AG04449 (cell line): ENCODE measurements at regions of chr17 and their contacts with region 1.

Region 1: DNA sequence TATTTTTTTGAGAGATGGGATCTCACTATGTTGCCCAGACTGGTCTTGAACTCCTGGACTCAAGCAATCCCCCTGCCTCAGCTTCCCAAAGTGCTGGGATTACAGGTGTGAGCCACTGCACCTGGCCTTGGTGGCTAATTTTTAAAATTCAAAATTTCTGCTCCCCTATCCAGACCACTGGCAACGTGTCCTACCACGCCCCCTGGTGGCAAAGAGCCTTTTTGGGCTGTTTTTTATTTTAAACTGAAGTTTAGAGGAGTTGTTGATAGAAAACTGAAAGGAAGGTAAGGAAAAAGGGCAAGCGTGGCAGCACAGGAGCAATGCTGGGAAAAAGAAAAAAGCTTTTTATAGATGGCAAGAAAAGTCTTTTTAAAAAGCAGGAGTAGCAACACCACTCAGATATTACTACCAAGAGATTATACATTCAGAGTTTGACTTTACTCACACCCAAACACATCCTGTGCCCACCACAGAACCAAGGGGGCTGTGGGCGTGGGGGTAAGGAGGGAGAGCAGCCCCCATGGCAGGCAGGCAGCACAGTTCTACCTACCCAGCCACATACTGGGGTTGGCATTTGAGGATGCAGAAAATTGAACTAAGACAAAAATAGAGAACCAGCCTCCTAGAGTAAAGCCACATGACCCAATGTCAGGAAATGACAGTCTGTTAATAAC is 4.2 kb upstream of the MXRA7 start:
- DNase-seq: no peak
- H3K4me3 ChIP-seq: no peak overlapping the region
- CTCF ChIP-seq: peak; percentile 61

Region 2: DNA sequence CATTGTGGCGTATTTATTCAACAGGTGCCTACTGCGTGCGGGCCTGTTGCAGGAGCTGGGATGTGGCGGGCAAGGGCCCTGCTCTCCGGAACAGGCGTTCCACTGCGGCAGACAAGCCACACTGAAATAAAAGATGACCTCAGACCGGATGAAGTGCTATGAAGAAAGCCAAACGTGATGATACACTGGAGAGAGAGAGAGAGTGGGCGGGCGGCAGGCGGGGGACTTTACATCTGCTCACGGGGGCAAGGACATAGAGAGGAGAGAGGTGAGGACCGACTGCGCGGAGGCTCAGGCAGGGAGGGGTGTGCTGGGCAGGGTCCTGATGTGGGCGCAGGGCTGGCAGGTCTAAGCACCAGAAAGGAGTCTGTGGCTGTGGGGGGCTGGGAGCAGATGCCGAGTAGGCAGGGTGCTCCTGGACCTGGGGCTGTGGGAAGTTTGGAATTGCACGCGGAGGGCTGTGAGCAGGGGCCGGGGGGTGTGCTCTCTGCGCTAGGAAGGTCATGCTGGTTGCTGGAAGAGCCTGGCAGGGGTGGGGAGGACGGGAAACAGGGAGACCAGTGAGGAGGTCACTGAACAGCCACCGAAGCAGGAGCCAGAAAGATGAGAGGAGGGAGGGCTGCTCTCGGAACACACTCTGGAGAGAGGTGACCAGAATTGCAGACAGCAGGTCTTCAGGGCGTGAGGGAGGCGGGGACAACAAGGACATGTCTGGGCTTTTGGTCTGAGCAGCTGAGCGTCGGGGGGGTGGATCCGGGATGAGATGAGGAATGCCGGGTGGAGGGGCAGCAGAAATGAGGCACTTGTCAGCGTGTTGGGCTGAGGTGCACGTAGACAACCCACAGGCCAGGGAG is 14.1 kb before region 1 on chr17:
- CTCF ChIA-PET with region 1: interaction called, 30 read pairs
- POLR2A ChIA-PET with region 1: interaction called, 8 read pairs
- DNase-seq: peak; percentile 56
- H3K4me3 ChIP-seq: peak overlapping the region; percentile 46
- CTCF ChIP-seq: no peak

Region 3: GRCh38 chr17:76737082-76737675 is 22.2 kb after region 1 on chr17 and contains the start of gene SRSF2:
- CTCF ChIA-PET with region 1: interaction called, 16 read pairs
- POLR2A ChIA-PET with region 1: interaction called, 27 read pairs
- DNase-seq: peak; percentile 84
- H3K4me3 ChIP-seq: peak within 1 kb of the TSS; percentile 97
- CTCF ChIP-seq: no peak